H1 (cell line): ENCODE measurements at regions of chr3 and their contacts with region 1.

Region 1: GRCh38 chr3:10263646-10264363 is 15.5 kb downstream of the TATDN2 start:
- DNase-seq: peak in 1 of 2 experiments; percentile 81
- H3K4me3 ChIP-seq: no peak overlapping the region
- H3K27ac ChIP-seq: no peak overlapping the region
- H3K4me1 ChIP-seq: no peaks in the 10 kb centered on the region; a peak in 2 of 7 replicates
- H3K27me3 ChIP-seq: no peaks in the 10 kb centered on the region
- CTCF ChIP-seq: peak; percentile 20 to 61 (median 23); a peak in 3 of 4 replicates
- EP300 ChIP-seq: no peak
- POLR2A ChIP-seq: no peak
- RAD21 ChIP-seq: peak; percentile 38 to 40; a peak in 3 of 4 replicates

Region 2: DNA sequence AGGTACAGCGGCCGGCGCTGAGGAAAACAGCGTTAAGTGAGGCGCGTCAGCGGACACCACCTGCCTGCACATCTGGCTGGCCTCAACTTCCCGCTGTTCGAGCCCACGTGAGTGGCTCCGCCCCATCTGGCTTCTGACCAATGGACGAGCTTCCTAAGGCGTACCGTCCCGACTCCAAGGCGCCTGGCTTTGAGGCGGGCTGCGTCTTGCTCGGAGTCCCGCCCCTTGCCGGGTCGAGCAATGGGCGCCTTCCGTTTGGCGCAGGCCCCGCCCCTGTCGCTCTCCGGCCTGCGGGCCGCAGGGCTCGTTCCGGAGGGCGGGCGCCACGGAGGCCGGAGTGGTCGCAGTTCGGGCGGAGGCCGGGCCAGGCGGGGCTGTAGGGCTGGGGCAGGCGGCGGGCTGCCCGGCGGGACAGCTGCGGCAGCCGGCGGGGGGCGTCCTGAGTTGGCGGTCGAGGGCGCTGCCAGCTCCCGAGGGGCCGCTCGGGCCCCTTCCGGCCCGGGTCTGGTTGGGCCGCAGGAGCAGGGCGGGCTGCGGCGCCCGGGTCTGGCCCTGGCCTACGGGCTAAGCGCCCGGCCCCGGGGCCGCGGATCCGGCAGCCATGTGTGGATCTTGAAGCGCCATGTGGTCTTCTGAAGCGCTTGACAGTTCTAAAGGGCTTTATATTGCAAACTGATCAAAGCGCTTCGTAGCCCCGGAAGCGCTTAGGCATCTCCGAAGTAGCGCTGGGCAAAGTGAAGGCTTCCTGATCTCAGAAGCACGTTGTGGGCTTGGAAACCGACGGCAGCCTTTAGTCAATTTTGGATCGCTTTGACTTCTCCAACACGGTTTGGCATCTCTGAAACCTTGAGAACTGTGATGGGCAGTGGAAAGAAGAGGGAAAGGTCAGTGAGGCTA is 15.4 kb before region 1 on chr3 and contains the start of gene TATDN2:
- CTCF ChIA-PET with region 1: interaction called, 11 read pairs
- POLR2A ChIA-PET with region 1: interaction called, 26 read pairs
- DNase-seq: peak; percentile 89 to 97
- H3K4me3 ChIP-seq: peak within 1 kb of the TSS; percentile 72 to 92 (median 86)
- H3K27ac ChIP-seq: peak within 1 kb of the TSS; percentile 58; the same call in 1 of the 2 replicates
- H3K4me1 ChIP-seq: peaks cover 0 to 11% (median 7%) of the 10 kb centered on the region in 4 experiments; a peak in 6 of 7 replicates
- H3K27me3 ChIP-seq: no peaks in the 10 kb centered on the region
- CTCF ChIP-seq: no peak
- EP300 ChIP-seq: no peak
- POLR2A ChIP-seq: peak; percentile 73 to 83
- RAD21 ChIP-seq: no peak
- total RNA-seq, gene TATDN2: 34.8 and 35.3 TPM in 2 replicates

Region 3: GRCh38 chr3:10253731-10254130 is 10.1 kb before region 1 on chr3:
- CTCF ChIA-PET with region 1: interaction called, 11 read pairs
- POLR2A ChIA-PET with region 1: interaction called, 26 read pairs
- DNase-seq: no peak
- H3K4me3 ChIP-seq: no peak overlapping the region
- H3K27ac ChIP-seq: no peak overlapping the region
- H3K4me1 ChIP-seq: peaks cover 0 to 7% (median 4%) of the 10 kb centered on the region in 4 experiments; a peak in 5 of 7 replicates
- H3K27me3 ChIP-seq: no peaks in the 10 kb centered on the region
- CTCF ChIP-seq: no peak
- EP300 ChIP-seq: no peak
- POLR2A ChIP-seq: no peak
- RAD21 ChIP-seq: no peak

Region 4: GRCh38 chr3:10286596-10287330 is 23.0 kb after region 1 on chr3:
- CTCF ChIA-PET with region 1: interaction called, 10 read pairs
- POLR2A ChIA-PET with region 1: interaction called, 4 read pairs
- DNase-seq: peak; percentile 57 to 75
- H3K4me3 ChIP-seq: no peak overlapping the region
- H3K27ac ChIP-seq: no peak overlapping the region
- H3K4me1 ChIP-seq: peaks cover 0 to 7% (median 4%) of the 10 kb centered on the region in 4 experiments; a peak in 6 of 7 replicates
- H3K27me3 ChIP-seq: no peaks in the 10 kb centered on the region
- CTCF ChIP-seq: peak in 2 of 3 experiments; percentile 40 to 53; a peak in 3 of 4 replicates
- EP300 ChIP-seq: no peak
- POLR2A ChIP-seq: no peak
- RAD21 ChIP-seq: peak; percentile 60 to 63

Region 5: GRCh38 chr3:10357592-10358308 is 93.9 kb after region 1 on chr3:
- CTCF ChIA-PET with region 1: no interaction called
- POLR2A ChIA-PET with region 1: no interaction called
- DNase-seq: no peak
- H3K4me3 ChIP-seq: no peak overlapping the region
- H3K27ac ChIP-seq: no peak overlapping the region
- H3K4me1 ChIP-seq: no peaks in the 10 kb centered on the region; a peak in 1 of 7 replicates
- H3K27me3 ChIP-seq: no peaks in the 10 kb centered on the region; a peak in 1 of 7 replicates
- CTCF ChIP-seq: no peak
- EP300 ChIP-seq: no peak
- POLR2A ChIP-seq: no peak
- RAD21 ChIP-seq: no peak